ENCODE measurements at regions of chr6 and their contacts with region 1.

Region 1: GRCh38 chr6:27893059-27893835 is 18.9 kb downstream of the OR2B2 start:
- DNase-seq: peak; percentile 91
- ATAC-seq: peak; percentile 46
- H3K4me3 Mint-ChIP-seq: no peak overlapping the region
- H3K27ac Mint-ChIP-seq: peak overlapping the region; percentile 99
- H3K4me1 Mint-ChIP-seq: peaks cover 42% of the 10 kb centered on the region
- H3K27me3 Mint-ChIP-seq: no peaks in the 10 kb centered on the region; the same call in 1 of the 2 replicates
- CTCF ChIP-seq: no peak

Region 2: GRCh38 chr6:26183581-26184366 is 1709.5 kb before region 1 on chr6:
- CTCF ChIA-PET with region 1: no interaction called
- POLR2A ChIA-PET with region 1: interaction called, 22 read pairs
- DNase-seq: peak; percentile 74
- ATAC-seq: peak; percentile 78
- H3K4me3 Mint-ChIP-seq: peak overlapping the region; percentile 90
- H3K27ac Mint-ChIP-seq: peak overlapping the region; percentile 99
- H3K4me1 Mint-ChIP-seq: peaks cover 45% of the 10 kb centered on the region
- H3K27me3 Mint-ChIP-seq: no peaks in the 10 kb centered on the region
- CTCF ChIP-seq: no peak

Region 3: GRCh38 chr6:27132532-27133280 is 760.5 kb before region 1 on chr6:
- CTCF ChIA-PET with region 1: no interaction called
- POLR2A ChIA-PET with region 1: interaction called, 34 read pairs
- DNase-seq: peak; percentile 85
- ATAC-seq: peak; percentile 86
- H3K4me3 Mint-ChIP-seq: no peak overlapping the region
- H3K27ac Mint-ChIP-seq: no peak overlapping the region
- H3K4me1 Mint-ChIP-seq: peaks cover 65% of the 10 kb centered on the region
- H3K27me3 Mint-ChIP-seq: no peaks in the 10 kb centered on the region
- CTCF ChIP-seq: no peak

Region 4: GRCh38 chr6:27825025-27825793 is 68.0 kb before region 1 on chr6:
- CTCF ChIA-PET with region 1: interaction called, 5 read pairs
- POLR2A ChIA-PET with region 1: interaction called, 300 read pairs
- DNase-seq: no peak
- ATAC-seq: no peak
- H3K4me3 Mint-ChIP-seq: peak overlapping the region; percentile 86
- H3K27ac Mint-ChIP-seq: peak overlapping the region; percentile 99
- H3K4me1 Mint-ChIP-seq: peaks cover 27% of the 10 kb centered on the region
- H3K27me3 Mint-ChIP-seq: no peaks in the 10 kb centered on the region
- CTCF ChIP-seq: no peak

Region 5: DNA sequence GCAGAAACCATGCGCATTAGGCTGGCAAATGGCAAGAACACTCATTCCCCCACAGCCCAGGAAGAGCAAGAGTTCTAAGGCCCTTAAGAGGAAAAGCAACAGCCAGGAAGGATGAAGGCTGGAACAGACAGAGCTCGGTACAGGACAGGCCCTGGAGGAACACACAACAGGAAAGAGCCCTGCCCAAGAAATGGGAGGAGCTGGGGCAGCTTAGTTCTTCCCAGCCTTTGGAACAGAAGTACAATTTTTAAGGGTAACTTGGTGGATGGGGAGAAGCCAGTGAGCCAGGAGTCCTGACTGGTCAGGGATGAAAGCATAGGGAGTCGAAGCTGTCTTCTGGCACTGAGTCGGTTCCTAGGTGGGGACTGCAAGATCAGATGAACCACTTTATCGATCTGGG is 13.4 kb before region 1 on chr6:
- CTCF ChIA-PET with region 1: no interaction called
- POLR2A ChIA-PET with region 1: interaction called, 817 read pairs
- DNase-seq: no peak
- ATAC-seq: no peak
- H3K4me3 Mint-ChIP-seq: no peak overlapping the region
- H3K27ac Mint-ChIP-seq: no peak overlapping the region; the same call in 1 of the 2 replicates
- H3K4me1 Mint-ChIP-seq: peaks cover 33% of the 10 kb centered on the region
- H3K27me3 Mint-ChIP-seq: no peaks in the 10 kb centered on the region
- CTCF ChIP-seq: no peak

Region 6: GRCh38 chr6:28789553-28790083 is 896.4 kb after region 1 on chr6:
- CTCF ChIA-PET with region 1: no interaction called
- POLR2A ChIA-PET with region 1: interaction called, 10 read pairs
- DNase-seq: peak; percentile 66
- ATAC-seq: peak; percentile 64
- H3K4me3 Mint-ChIP-seq: peak overlapping the region; percentile 89
- H3K27ac Mint-ChIP-seq: peak overlapping the region; percentile 38
- H3K4me1 Mint-ChIP-seq: peaks cover 30% of the 10 kb centered on the region
- H3K27me3 Mint-ChIP-seq: peaks cover 99% of the 10 kb centered on the region
- CTCF ChIP-seq: no peak

Measured in WTC11 (cell line).